Caco-2 (cell line): ENCODE measurements at regions of chr13 and their contacts with region 1.

Region 1: DNA sequence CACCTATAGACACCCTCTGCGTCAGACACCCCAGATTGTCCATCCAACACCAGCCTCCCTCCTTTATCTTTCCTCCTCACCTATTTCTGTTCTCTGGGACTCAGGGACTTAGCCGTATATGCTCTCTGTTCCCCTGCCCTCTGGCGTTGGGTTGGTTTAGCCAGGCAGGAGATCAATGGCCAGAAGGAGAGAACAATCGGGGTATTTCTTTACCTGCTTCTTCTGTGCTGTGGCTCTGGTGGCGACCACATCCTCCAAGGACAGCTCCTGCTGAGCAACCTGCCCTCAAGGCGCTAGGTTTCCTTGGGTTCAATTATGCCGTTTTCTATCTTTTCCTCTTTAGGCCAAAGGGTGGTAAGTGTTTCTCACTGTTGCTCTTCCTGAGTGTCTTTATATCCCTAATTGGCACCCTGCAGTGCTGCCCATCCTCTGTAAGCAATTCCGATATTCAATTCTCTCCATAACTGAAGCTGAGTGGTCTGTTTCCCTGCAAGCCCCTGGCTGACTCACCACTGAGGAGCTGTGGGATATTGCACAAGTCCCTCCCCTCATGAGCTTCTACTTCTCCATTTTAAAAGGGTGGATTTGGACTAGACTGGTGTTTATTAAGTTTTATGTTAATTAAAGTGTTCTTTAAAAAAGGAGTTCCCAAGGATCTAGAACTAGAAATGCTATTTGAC is 63.7 kb upstream of the TMTC4 start:
- DNase-seq: no peak
- H3K4me3 ChIP-seq: no peak overlapping the region
- H3K4me3 Mint-ChIP-seq: no peak overlapping the region
- H3K27ac Mint-ChIP-seq: no peak overlapping the region
- H3K4me1 ChIP-seq: peaks cover 35% of the 10 kb centered on the region
- H3K4me1 Mint-ChIP-seq: peaks cover 7% of the 10 kb centered on the region
- H3K27me3 ChIP-seq: no peaks in the 10 kb centered on the region
- H3K27me3 Mint-ChIP-seq: no peaks in the 10 kb centered on the region
- CTCF ChIP-seq: no peak

Region 2: DNA sequence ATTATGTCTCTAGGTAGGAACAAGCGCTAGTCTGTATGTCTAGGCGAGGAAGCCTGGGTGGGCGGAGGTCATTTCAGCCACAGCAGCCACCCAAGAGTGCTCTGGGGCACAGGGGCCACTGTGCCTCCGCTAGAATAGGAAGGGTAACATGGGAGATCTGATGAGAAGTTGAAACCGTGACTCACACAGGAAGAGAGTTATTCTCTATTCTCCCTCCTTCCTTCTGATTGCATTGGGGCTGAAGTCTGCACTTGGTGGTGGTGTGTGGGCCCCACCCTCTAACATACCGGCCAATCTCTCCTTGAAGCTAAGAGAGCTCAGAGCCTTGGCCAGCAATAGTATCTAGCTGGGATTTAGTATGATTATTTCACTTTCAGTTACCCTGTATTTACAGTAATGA is 129.4 kb before region 1 on chr13:
- CTCF ChIA-PET with region 1: no interaction called
- POLR2A ChIA-PET with region 1: no interaction called
- intact Hi-C with region 1: no loop called
- DNase-seq: no peak
- H3K4me3 ChIP-seq: no peak overlapping the region
- H3K4me3 Mint-ChIP-seq: no peak overlapping the region
- H3K27ac Mint-ChIP-seq: no peak overlapping the region
- H3K4me1 ChIP-seq: no peaks in the 10 kb centered on the region
- H3K4me1 Mint-ChIP-seq: no peaks in the 10 kb centered on the region
- H3K27me3 ChIP-seq: no peaks in the 10 kb centered on the region
- H3K27me3 Mint-ChIP-seq: no peaks in the 10 kb centered on the region
- CTCF ChIP-seq: no peak

Region 3: DNA sequence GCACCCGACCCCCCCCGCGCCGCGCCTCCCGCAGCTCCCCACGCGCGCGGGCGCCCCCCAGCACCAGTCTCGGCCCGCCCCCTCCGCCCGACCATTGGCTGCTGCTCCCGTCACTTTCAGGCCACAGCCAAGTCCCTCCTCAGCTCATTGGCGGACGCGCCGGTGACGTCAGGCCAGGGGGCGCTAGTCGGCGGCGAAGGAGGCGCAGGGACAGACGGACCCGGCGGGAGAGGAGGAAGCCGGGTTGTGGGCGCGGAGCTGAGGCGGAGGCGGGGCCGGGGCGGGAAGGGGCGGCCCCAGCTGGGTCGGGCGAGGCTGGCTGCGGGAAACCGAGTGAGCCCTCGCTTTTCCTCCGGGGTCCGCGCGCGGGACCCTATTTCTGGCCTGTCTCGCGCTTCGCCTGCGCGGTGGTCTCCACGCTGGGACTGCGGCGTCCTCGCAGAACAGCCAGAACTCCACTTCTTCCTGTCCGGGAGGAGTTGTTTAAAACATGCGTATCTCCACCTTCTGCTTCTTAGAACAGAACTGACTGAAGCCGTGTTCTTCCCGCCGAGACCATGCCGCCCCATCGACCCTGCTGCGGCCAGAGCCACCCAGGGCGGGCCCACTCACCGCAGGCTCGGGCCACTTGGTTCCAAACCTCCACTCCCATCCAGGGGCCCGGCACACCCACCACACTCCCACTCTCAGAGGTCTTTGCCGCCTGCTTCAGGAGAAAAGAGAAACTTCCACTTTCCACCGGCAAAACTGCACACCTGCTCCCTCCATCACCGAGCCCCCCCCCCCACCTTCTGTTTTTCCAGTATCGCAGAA is 63.3 kb before region 1 on chr13:
- CTCF ChIA-PET with region 1: no interaction called
- POLR2A ChIA-PET with region 1: interaction called, 9 read pairs
- intact Hi-C with region 1: loop called (anchors 2 kb)
- DNase-seq: peak; percentile 100
- H3K4me3 ChIP-seq: peak overlapping the region; percentile 73
- H3K4me3 Mint-ChIP-seq: peak overlapping the region; percentile 96
- H3K27ac Mint-ChIP-seq: peak overlapping the region; percentile 15
- H3K4me1 ChIP-seq: peaks cover 15% of the 10 kb centered on the region
- H3K4me1 Mint-ChIP-seq: peaks cover 17% of the 10 kb centered on the region
- H3K27me3 ChIP-seq: no peaks in the 10 kb centered on the region
- H3K27me3 Mint-ChIP-seq: no peaks in the 10 kb centered on the region
- CTCF ChIP-seq: peak; percentile 42 to 59

Region 4: DNA sequence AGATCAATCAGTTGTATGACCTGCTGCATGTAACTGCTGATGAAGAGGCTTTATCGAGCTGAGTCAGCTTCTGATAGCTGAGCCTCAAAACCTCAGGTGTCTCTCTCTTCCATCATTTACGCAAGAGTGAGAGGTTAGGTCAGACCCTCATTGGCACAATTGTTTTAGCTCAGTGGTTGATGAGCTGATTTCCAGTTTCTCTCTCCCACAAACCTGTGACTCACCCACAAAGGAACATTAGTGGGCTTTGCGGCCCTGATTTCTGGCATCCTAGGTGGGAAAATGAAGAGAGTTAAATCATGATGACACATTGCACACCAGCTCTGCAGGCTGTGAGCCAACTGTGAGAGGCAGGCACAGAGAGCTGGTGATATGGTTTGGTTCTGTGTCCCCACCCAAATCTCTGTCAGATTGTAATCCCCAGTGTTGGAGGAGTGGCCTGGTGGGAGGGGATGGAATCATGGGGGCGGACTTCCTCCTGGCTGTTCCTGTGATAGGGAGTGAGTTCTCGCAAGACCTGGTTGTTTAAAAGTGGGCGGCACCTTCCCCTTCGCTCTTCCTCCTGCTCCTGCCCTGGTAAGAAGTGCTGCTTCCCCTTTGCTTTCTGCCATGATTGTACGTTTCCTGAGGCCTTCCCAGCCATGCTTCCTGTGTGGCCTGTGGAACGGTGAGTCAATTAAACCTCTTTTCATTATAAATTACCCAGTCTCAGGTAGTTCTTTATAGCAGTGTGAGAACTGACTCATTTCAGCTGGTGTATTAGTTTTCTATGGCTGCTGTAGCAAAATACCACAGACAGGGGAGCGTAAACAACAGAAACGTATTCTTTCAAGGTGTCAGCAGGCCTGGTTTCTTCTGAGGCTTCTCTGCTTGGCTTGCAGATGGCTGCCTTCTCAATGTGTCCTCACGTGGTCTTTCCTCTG is 30.2 kb before region 1 on chr13:
- CTCF ChIA-PET with region 1: no interaction called
- POLR2A ChIA-PET with region 1: no interaction called
- intact Hi-C with region 1: no loop called
- DNase-seq: no peak
- H3K4me3 ChIP-seq: no peak overlapping the region
- H3K4me3 Mint-ChIP-seq: no peak overlapping the region
- H3K27ac Mint-ChIP-seq: no peak overlapping the region
- H3K4me1 ChIP-seq: no peaks in the 10 kb centered on the region
- H3K4me1 Mint-ChIP-seq: no peaks in the 10 kb centered on the region
- H3K27me3 ChIP-seq: no peaks in the 10 kb centered on the region
- H3K27me3 Mint-ChIP-seq: no peaks in the 10 kb centered on the region
- CTCF ChIP-seq: no peak

Region 5: DNA sequence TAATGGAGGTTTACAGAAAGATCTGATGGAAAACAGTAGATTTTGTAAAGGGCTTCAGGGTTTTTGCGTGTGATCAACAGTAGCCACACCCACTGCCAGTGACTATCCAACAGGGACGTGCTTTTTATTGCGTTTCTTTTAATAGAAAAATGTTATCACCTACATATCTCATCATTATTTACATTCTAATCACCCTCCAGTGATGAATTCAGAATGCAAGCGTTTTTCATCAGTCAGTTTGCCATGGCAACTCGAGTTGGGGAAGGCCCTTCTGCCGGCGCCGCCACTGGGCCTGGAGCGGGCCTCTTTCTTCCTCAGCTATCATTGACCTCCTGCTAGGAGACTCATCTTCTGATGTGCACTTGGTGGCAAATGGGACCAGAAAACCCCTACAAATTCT is 26.6 kb after region 1 on chr13:
- CTCF ChIA-PET with region 1: no interaction called
- POLR2A ChIA-PET with region 1: no interaction called
- intact Hi-C with region 1: loop called (anchors 1 kb)
- DNase-seq: no peak
- H3K4me3 ChIP-seq: no peak overlapping the region
- H3K4me3 Mint-ChIP-seq: no peak overlapping the region
- H3K27ac Mint-ChIP-seq: no peak overlapping the region
- H3K4me1 ChIP-seq: 0 out of 2 replicates have a peak, but pooled peaks cover 3% of the 10 kb centered on the region
- H3K4me1 Mint-ChIP-seq: peaks cover 12% of the 10 kb centered on the region
- H3K27me3 ChIP-seq: no peaks in the 10 kb centered on the region
- H3K27me3 Mint-ChIP-seq: peaks cover under 1% of the 10 kb centered on the region
- CTCF ChIP-seq: no peak

Region 6: DNA sequence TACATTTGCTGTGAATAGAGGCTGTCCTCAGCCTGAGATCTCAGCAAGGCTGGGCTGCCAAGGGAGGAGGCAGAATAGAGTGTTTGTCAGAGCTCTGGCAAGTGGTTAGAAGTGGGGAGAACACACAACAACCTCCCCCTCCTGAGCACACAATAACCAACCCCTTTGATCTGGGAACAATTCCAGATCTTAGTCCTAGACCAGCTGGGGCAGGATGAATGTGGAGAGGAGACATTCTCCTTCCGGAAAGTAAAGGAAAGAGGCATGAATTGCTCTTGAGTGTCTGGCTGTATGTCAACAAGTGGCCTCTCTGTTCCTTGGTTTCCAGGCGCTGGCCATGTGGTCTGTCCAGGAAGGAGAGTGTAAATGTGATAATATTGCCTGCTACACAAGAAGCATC is 51.2 kb after region 1 on chr13:
- CTCF ChIA-PET with region 1: interaction called, 4 read pairs
- POLR2A ChIA-PET with region 1: no interaction called
- intact Hi-C with region 1: loop called (anchors 2 kb)
- DNase-seq: no peak
- H3K4me3 ChIP-seq: no peak overlapping the region
- H3K4me3 Mint-ChIP-seq: no peak overlapping the region
- H3K27ac Mint-ChIP-seq: no peak overlapping the region
- H3K4me1 ChIP-seq: no peaks in the 10 kb centered on the region
- H3K4me1 Mint-ChIP-seq: no peaks in the 10 kb centered on the region
- H3K27me3 ChIP-seq: no peaks in the 10 kb centered on the region
- H3K27me3 Mint-ChIP-seq: no peaks in the 10 kb centered on the region
- CTCF ChIP-seq: no peak

Region 7: GRCh38 chr13:100828226-100828625 is 89.9 kb after region 1 on chr13:
- CTCF ChIA-PET with region 1: no interaction called
- POLR2A ChIA-PET with region 1: no interaction called
- intact Hi-C with region 1: loop called (anchors 1 kb)
- DNase-seq: peak; percentile 23 to 41
- H3K4me3 ChIP-seq: no peak overlapping the region
- H3K4me3 Mint-ChIP-seq: no peak overlapping the region
- H3K27ac Mint-ChIP-seq: no peak overlapping the region
- H3K4me1 ChIP-seq: no peaks in the 10 kb centered on the region
- H3K4me1 Mint-ChIP-seq: peaks cover 7% of the 10 kb centered on the region
- H3K27me3 ChIP-seq: no peaks in the 10 kb centered on the region
- H3K27me3 Mint-ChIP-seq: no peaks in the 10 kb centered on the region
- CTCF ChIP-seq: peak; percentile 30 to 57